BJ (cell line): ENCODE measurements at regions of chr17 and their contacts with region 1.

Region 1: GRCh38 chr17:59837308-59838051 is 55.3 kb downstream of the TUBD1 start:
- DNase-seq: peak; percentile 100
- H3K4me3 ChIP-seq: peak overlapping the region; percentile 92
- H3K27me3 ChIP-seq: no peaks in the 10 kb centered on the region
- CTCF ChIP-seq: no peak

Region 2: GRCh38 chr17:59753522-59754467 is 83.7 kb before region 1 on chr17:
- CTCF ChIA-PET with region 1: interaction called, 18 read pairs
- POLR2A ChIA-PET with region 1: interaction called, 45 read pairs
- DNase-seq: peak; percentile 66
- H3K4me3 ChIP-seq: 0 out of 2 replicates have a peak overlapping the region, but pooled peaks have one; percentile 13
- H3K27me3 ChIP-seq: no peaks in the 10 kb centered on the region
- CTCF ChIP-seq: peak; percentile 54

Region 3: DNA sequence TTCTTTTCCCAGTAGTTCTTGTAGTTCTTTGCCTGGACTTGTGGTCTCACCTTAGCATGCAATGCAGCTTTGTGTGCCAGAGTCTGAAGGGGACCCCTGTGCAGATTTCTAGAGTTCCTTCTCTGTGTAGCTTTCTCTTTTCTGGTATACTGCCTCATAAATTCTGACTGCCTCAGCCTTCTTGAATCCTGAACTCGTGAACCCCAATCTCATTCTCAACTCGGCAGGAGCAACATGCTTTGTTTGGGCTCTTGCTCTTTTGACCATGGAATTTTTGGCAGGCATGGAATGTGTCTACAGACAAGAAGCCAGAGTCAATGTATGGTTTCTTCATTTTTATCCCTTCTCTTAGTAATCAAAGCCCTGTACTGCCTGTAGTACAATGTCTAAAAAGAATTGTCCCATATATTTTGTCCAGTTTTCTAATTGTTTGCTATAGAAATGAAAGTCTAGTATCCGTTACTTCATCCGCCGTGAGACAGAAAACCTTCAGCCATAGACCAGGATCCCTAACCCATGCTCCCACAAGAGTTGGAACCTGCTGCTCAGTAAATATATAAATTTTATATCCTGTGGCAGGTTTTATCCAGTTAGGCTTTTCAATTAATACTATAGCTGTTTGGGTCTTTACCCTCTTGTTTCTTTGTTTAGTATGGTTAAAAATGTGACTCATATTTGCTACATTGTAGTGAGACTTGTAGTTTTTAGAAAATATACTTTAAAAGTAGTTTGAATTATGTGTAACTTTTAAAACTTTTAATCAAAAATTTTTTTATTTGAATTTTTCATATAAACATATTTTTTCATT is 75.6 kb before region 1 on chr17:
- CTCF ChIA-PET with region 1: interaction called, 4 read pairs
- POLR2A ChIA-PET with region 1: interaction called, 41 read pairs
- DNase-seq: peak; percentile 65
- H3K4me3 ChIP-seq: no peak overlapping the region
- H3K27me3 ChIP-seq: no peaks in the 10 kb centered on the region
- CTCF ChIP-seq: no peak

Region 4: DNA sequence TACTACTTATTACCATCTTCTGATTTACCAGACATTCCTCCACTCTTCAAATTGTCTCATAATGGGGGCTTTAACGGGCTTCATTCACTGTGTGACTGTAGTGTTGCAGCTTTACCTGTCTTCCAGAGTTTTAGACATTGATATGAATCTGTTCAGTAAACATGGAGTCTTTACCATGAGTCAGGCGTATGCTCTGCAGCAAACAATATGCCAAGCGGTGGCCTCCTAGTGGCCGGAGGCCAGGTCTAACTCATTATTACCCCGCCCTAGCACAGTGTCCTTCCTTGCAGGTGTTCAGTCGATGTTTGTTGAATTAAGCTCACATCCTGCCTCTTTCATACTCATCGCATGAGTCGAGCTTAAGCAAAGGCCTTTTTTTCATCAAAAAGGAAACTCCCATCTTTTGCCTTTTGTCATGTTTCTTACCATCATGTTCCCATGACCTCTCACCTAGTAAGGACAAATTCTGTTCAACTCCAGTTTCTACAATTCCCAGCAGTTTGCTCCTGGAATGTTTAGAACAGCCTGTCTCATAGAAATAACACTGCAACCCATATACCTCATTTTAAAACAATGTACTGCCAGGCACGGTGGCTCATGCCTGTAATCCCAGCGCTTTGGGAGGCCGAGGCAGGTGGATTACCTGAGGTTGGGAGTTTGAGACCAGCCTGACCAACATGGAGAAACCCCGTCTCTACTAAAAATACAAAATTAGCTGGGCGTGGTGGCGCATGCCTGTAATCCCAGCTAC is 15.9 kb after region 1 on chr17:
- CTCF ChIA-PET with region 1: no interaction called
- POLR2A ChIA-PET with region 1: interaction called, 22 read pairs
- DNase-seq: no peak
- H3K4me3 ChIP-seq: no peak overlapping the region
- H3K27me3 ChIP-seq: no peaks in the 10 kb centered on the region
- CTCF ChIP-seq: peak; percentile 37